HepG2 (cell line): ENCODE measurements at regions of chr3 and their contacts with region 1.

Region 1: DNA sequence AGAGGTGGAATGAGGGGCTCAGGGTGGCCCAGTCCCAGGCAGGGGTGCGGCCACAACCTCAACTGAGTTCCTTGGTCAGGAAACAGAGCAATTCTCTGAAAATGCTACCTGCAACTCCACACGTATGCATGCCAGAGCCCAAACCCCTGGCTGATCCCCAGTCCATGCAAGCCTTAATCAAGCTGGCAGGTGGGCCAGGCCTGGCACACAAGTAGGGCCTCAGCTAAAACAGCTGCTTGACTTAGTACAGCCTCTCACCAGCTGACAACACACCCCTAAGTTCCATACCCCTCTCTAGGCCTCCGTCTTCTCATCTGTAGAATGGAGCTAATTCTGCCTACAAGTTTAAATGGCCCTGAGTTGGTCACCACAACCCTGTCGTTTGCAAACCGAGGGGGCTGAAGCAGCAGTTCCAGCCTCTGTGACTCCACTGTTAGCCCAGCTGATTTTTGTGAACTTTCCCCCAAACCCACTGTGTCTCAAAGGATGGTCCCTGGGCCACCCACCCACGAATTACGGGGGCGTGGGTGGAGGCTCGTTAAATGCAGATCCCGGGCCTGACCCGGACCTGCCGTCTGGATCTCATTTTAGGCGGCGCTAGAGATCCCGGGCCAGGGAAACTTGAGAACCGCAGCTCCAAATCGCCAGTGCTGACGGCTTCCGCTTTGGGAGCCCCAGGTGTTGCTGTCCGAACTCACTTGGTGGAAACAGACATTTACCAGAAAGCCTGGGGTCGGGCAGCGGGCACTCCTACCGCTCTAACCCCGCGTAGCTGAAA is 927 bp downstream of the CHDH start:
- DNase-seq: peak; percentile 47
- ATAC-seq: no peak
- H3K4me3 ChIP-seq: peak overlapping the region; percentile 73 to 92 (median 77)
- H3K27ac ChIP-seq: peak overlapping the region; percentile 98
- H3K4me1 ChIP-seq: peaks cover 66% of the 10 kb centered on the region
- H3K27me3 ChIP-seq: no peaks in the 10 kb centered on the region; a peak in 1 of 5 replicates
- CTCF ChIP-seq: peak; percentile 27; the same call in 1 of the 2 replicates
- EP300 ChIP-seq: no peak
- POLR2A ChIP-seq: peak in 1 of 2 experiments; percentile 2; a peak in 1 of 4 replicates
- RAD21 ChIP-seq: no peak

Region 2: GRCh38 chr3:53347261-53348064 is 497.8 kb before region 1 on chr3 and contains the start of gene DCP1A:
- CTCF ChIA-PET with region 1: no interaction called
- POLR2A ChIA-PET with region 1: interaction called, 10 read pairs
- in situ Hi-C with region 1: no loop called
- intact Hi-C with region 1: no loop called
- DNase-seq: peak; percentile 93
- ATAC-seq: peak; percentile 96
- H3K4me3 ChIP-seq: peak within 1 kb of the TSS; percentile 76 to 99 (median 97)
- H3K27ac ChIP-seq: peak within 1 kb of the TSS; percentile 98
- H3K4me1 ChIP-seq: peaks cover 40% of the 10 kb centered on the region
- H3K27me3 ChIP-seq: no peaks in the 10 kb centered on the region; a peak in 1 of 5 replicates
- CTCF ChIP-seq: peak; percentile 45
- EP300 ChIP-seq: peak; percentile 68 to 81; a peak in 2 of 4 replicates
- POLR2A ChIP-seq: peak; percentile 94 to 97
- RAD21 ChIP-seq: peak; percentile 75
- total RNA-seq, gene DCP1A: 14.2 and 20.7 TPM in 2 replicates

Region 3: GRCh38 chr3:53718472-53718871 is 126.8 kb before region 1 on chr3:
- CTCF ChIA-PET with region 1: no interaction called
- POLR2A ChIA-PET with region 1: no interaction called
- in situ Hi-C with region 1: no loop called
- intact Hi-C with region 1: no loop called
- DNase-seq: no peak
- ATAC-seq: no peak
- H3K4me3 ChIP-seq: no peak overlapping the region
- H3K27ac ChIP-seq: no peak overlapping the region
- H3K4me1 ChIP-seq: no peaks in the 10 kb centered on the region
- H3K27me3 ChIP-seq: no peaks in the 10 kb centered on the region
- CTCF ChIP-seq: no peak
- EP300 ChIP-seq: no peak
- POLR2A ChIP-seq: no peak
- RAD21 ChIP-seq: no peak

Region 4: GRCh38 chr3:53729618-53730017 is 115.7 kb before region 1 on chr3:
- CTCF ChIA-PET with region 1: no interaction called
- POLR2A ChIA-PET with region 1: no interaction called
- in situ Hi-C with region 1: no loop called
- intact Hi-C with region 1: loop called (anchors 2 kb)
- DNase-seq: peak; percentile 56
- ATAC-seq: peak; percentile 98
- H3K4me3 ChIP-seq: no peak overlapping the region
- H3K27ac ChIP-seq: no peak overlapping the region
- H3K4me1 ChIP-seq: peaks cover 17% of the 10 kb centered on the region
- H3K27me3 ChIP-seq: no peaks in the 10 kb centered on the region
- CTCF ChIP-seq: peak; percentile 74
- EP300 ChIP-seq: no peak
- POLR2A ChIP-seq: no peak
- RAD21 ChIP-seq: no peak

Region 5: GRCh38 chr3:53821631-53822121 is 23.6 kb before region 1 on chr3:
- CTCF ChIA-PET with region 1: no interaction called
- POLR2A ChIA-PET with region 1: interaction called, 156 read pairs
- in situ Hi-C with region 1: no loop called
- intact Hi-C with region 1: no loop called
- DNase-seq: no peak
- ATAC-seq: no peak
- H3K4me3 ChIP-seq: no peak overlapping the region
- H3K27ac ChIP-seq: no peak overlapping the region
- H3K4me1 ChIP-seq: peaks cover 71% of the 10 kb centered on the region
- H3K27me3 ChIP-seq: no peaks in the 10 kb centered on the region
- CTCF ChIP-seq: no peak
- EP300 ChIP-seq: no peak
- POLR2A ChIP-seq: no peak
- RAD21 ChIP-seq: no peak

Region 6: DNA sequence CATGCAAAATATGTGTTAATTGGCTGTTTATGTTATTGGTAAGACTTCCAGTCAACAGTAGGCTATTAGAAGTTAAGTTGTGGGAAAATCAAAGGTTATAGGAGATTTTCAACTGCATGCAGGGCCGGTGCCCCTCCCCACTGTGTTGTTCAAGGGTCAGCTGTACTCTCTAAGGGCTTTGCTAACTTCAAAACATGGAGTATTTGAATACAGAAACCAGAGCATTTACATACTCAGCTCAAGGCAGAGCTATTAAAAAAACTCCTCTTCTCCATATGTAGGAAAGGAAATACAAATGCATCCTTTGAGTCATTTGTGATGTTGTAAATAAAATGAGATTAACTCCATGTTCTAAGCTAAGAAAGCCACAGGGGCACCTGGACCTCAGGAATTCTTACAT is 17.9 kb after region 1 on chr3:
- CTCF ChIA-PET with region 1: interaction called, 3 read pairs
- POLR2A ChIA-PET with region 1: interaction called, 39 read pairs
- in situ Hi-C with region 1: no loop called
- intact Hi-C with region 1: no loop called
- DNase-seq: no peak
- ATAC-seq: peak; percentile 34
- H3K4me3 ChIP-seq: no peak overlapping the region
- H3K27ac ChIP-seq: no peak overlapping the region
- H3K4me1 ChIP-seq: peaks cover 29% of the 10 kb centered on the region
- H3K27me3 ChIP-seq: no peaks in the 10 kb centered on the region
- CTCF ChIP-seq: no peak
- EP300 ChIP-seq: no peak
- POLR2A ChIP-seq: no peak
- RAD21 ChIP-seq: no peak

Region 7: DNA sequence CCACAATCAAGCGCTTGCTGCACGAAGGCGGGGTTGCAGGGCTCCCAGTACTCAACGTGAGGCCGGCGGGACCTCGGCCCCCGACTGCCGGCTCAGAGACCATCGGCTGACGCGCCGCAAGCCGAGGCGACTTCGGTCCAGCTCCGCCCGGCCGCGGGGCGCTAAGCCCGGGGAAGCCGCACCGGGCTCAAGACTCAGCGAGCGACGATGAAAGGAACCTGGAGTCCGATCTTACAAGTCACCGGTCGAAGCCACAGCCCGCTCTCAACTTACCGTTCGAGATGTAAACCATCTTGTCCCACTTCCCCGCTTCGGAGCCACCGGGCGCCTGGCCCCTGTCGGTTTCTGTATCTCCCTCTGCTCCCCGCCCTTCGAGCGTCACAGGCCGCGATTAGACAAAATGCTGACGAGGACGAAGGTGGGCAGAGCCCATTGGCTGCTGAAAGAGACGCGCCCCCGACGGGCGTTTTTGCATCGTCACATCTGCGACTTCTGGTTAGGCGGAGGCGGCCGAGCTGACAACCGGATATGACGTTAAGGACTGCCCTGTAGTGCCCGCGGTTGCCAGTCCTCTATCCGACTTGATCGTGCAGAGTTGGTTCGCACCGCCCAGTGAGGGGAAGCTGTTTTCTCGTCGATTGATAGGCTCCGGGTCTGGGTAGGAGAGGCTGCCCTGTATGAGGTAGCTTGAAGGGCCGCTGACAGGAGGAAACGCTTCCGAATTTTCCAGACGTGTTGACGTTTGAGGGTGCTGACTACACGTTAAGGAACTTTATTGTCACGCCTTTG is 46.4 kb after region 1 on chr3 and contains the start of gene SELENOK:
- CTCF ChIA-PET with region 1: no interaction called
- POLR2A ChIA-PET with region 1: interaction called, 50 read pairs
- in situ Hi-C with region 1: no loop called
- intact Hi-C with region 1: loop called (anchors 2 kb)
- DNase-seq: peak; percentile 98
- ATAC-seq: peak; percentile 98
- H3K4me3 ChIP-seq: peak within 1 kb of the TSS; percentile 89 to 100 (median 97)
- H3K27ac ChIP-seq: peak within 1 kb of the TSS; percentile 82
- H3K4me1 ChIP-seq: peaks cover 26% of the 10 kb centered on the region
- H3K27me3 ChIP-seq: no peaks in the 10 kb centered on the region; a peak in 1 of 5 replicates
- CTCF ChIP-seq: no peak
- EP300 ChIP-seq: no peak
- POLR2A ChIP-seq: peak; percentile 86 to 90
- RAD21 ChIP-seq: peak; percentile 18; the same call in 1 of the 2 replicates
- total RNA-seq, gene SELENOK: 47.5 and 67.0 TPM in 2 replicates